ENCODE measurements at regions of chr6 and their contacts with region 1.

Region 1: GRCh38 chr6:126176282-126176681 is 163.6 kb upstream of the CENPW start:
- DNase-seq: peak; percentile 46
- ATAC-seq: peak; percentile 27
- H3K4me3 ChIP-seq: no peak overlapping the region
- H3K27ac ChIP-seq: no peak overlapping the region
- H3K4me1 ChIP-seq: peaks cover 18% of the 10 kb centered on the region
- H3K27me3 ChIP-seq: no peaks in the 10 kb centered on the region
- CTCF ChIP-seq: peak; percentile 66

Region 2: DNA sequence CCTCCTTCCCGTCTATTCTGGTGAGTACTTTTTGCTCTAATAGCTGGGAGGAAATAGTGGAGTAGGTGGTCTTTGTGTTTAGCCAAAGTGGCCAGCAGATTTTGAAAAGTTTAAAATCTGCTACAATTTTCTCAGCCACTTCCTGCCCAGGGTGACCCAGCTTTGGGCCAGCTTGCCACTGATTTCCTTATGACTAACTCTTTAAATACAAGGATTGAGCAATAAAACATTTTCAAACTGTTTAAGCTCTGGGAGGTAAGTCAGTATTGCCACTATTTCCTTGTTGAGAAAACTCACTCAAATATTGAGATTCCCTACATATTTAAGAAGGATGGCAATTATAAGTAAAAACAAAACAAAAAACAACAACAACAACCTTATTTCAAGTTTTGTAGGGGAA is 135.5 kb before region 1 on chr6:
- CTCF ChIA-PET with region 1: no interaction called
- POLR2A ChIA-PET with region 1: no interaction called
- intact Hi-C with region 1: loop called (anchors 5 kb)
- DNase-seq: peak; percentile 75
- ATAC-seq: peak; percentile 95
- H3K4me3 ChIP-seq: peak overlapping the region; percentile 10; the same call in 1 of the 2 replicates
- H3K27ac ChIP-seq: peak overlapping the region; percentile 81
- H3K4me1 ChIP-seq: peaks cover 45% of the 10 kb centered on the region
- H3K27me3 ChIP-seq: no peaks in the 10 kb centered on the region
- CTCF ChIP-seq: no peak

Region 3: GRCh38 chr6:126312013-126312663 is 135.9 kb after region 1 on chr6:
- CTCF ChIA-PET with region 1: no interaction called
- POLR2A ChIA-PET with region 1: no interaction called
- intact Hi-C with region 1: loop called (anchors 1 kb)
- DNase-seq: peak; percentile 49
- ATAC-seq: peak; percentile 77
- H3K4me3 ChIP-seq: no peak overlapping the region
- H3K27ac ChIP-seq: no peak overlapping the region
- H3K4me1 ChIP-seq: no peaks in the 10 kb centered on the region
- H3K27me3 ChIP-seq: no peaks in the 10 kb centered on the region
- CTCF ChIP-seq: peak; percentile 48; the same call in 1 of the 2 replicates

Region 4: GRCh38 chr6:126339796-126340609 is 163.7 kb after region 1 on chr6 and contains the start of gene CENPW:
- CTCF ChIA-PET with region 1: no interaction called
- POLR2A ChIA-PET with region 1: no interaction called
- intact Hi-C with region 1: loop called (anchors 2 kb)
- DNase-seq: peak; percentile 88
- ATAC-seq: peak; percentile 83
- H3K4me3 ChIP-seq: peak within 1 kb of the TSS; percentile 99
- H3K27ac ChIP-seq: peak within 1 kb of the TSS; percentile 59
- H3K4me1 ChIP-seq: peaks cover 12% of the 10 kb centered on the region
- H3K27me3 ChIP-seq: no peaks in the 10 kb centered on the region
- CTCF ChIP-seq: no peak
- total RNA-seq, gene CENPW: 28.9 and 33.6 TPM in 2 replicates

Region 5: DNA sequence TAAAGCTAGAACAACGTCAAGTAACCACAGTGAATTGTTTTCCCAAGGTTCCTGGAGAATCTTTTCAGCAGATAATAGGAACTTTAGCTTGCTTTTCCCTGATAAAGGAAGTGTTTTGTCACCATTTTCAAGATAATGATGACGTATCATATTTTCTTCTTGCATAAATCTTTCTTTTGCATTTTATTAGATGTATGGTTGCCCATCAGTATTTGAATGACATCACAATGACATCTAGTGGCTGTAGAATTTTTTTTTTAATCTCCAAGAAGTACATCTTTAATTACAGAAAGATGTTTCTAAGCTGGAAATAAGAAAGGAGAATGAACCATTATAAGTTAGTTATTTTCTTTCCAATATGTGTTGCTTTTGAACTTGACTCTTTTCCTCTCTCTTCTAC is 246.6 kb after region 1 on chr6:
- CTCF ChIA-PET with region 1: no interaction called
- POLR2A ChIA-PET with region 1: no interaction called
- intact Hi-C with region 1: loop called (anchors 2 kb)
- DNase-seq: peak; percentile 5
- ATAC-seq: no peak
- H3K4me3 ChIP-seq: no peak overlapping the region
- H3K27ac ChIP-seq: no peak overlapping the region
- H3K4me1 ChIP-seq: no peaks in the 10 kb centered on the region
- H3K27me3 ChIP-seq: no peaks in the 10 kb centered on the region; the same call in 1 of the 2 replicates
- CTCF ChIP-seq: no peak

Region 6: GRCh38 chr6:126657561-126658175 is 481.4 kb after region 1 on chr6:
- CTCF ChIA-PET with region 1: no interaction called
- POLR2A ChIA-PET with region 1: no interaction called
- intact Hi-C with region 1: loop called (anchors 1 kb)
- DNase-seq: peak; percentile 58
- ATAC-seq: peak; percentile 43; the same call in 1 of the 2 replicates
- H3K4me3 ChIP-seq: no peak overlapping the region
- H3K27ac ChIP-seq: no peak overlapping the region
- H3K4me1 ChIP-seq: no peaks in the 10 kb centered on the region
- H3K27me3 ChIP-seq: no peaks in the 10 kb centered on the region
- CTCF ChIP-seq: peak; percentile 68

Measured in PC-3 (cell line).